ENCODE measurements at regions of chr7 and their contacts with region 1.

Region 1: DNA sequence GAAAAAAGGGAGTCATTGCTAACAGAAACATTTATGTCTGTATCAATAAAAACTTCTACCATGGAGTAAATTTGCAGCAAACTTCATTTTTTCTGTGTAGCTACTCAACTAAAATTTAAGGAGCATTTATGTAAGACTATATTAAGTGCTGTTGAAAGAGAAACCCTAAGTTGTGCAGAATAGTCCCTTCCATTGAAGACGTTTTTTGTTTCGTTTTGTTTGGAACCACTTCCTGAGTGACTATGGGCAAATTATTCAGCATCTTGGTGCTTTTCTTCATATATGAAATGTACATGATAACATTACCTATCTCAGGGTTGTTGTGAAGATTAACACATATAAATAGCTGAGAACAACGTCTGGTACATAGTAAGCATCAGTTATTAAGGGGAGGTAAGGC is 24.3 kb downstream of the SEM1 start:
- DNase-seq: no peak
- ATAC-seq: no peak
- H3K4me3 ChIP-seq: no peak overlapping the region
- H3K27ac ChIP-seq: no peak overlapping the region
- H3K4me1 ChIP-seq: peaks cover 0 to 20% (median 8%) of the 10 kb centered on the region in 9 donors
- H3K27me3 ChIP-seq: no peaks in the 10 kb centered on the region
- CTCF ChIP-seq: no peak

Region 2: GRCh38 chr7:96667026-96667425 is 18.3 kb before region 1 on chr7:
- intact Hi-C with region 1: loop called in 1 of 10 experiments (anchors 2 kb)
- DNase-seq: no peak
- ATAC-seq: no peak
- H3K4me3 ChIP-seq: no peak overlapping the region
- H3K27ac ChIP-seq: no peak overlapping the region
- H3K4me1 ChIP-seq: no peaks in the 10 kb centered on the region
- H3K27me3 ChIP-seq: no peaks in the 10 kb centered on the region
- CTCF ChIP-seq: no peak